Ascending aorta (tissue), 2 donors: ENCODE measurements at regions of chr12 and their contacts with region 1.

Region 1: GRCh38 chr12:52372216-52373154 is 5.2 kb upstream of the KRT85 start:
- DNase-seq: peak; percentile 29 to 87
- H3K4me3 ChIP-seq: no peak overlapping the region
- H3K27ac ChIP-seq: peak overlapping the region in 1 of 2 donors; percentile 68
- H3K4me1 ChIP-seq: peaks cover 0 to 11% of the 10 kb centered on the region in 2 donors
- H3K27me3 ChIP-seq: no peaks in the 10 kb centered on the region
- CTCF ChIP-seq: peak; percentile 65 to 84 (median 66)

Region 2: GRCh38 chr12:51521554-51522276 is 850.8 kb before region 1 on chr12:
- intact Hi-C with region 1: no loop called
- DNase-seq: no peak
- H3K4me3 ChIP-seq: no peak overlapping the region
- H3K27ac ChIP-seq: no peak overlapping the region
- H3K4me1 ChIP-seq: no peaks in the 10 kb centered on the region
- H3K27me3 ChIP-seq: no peaks in the 10 kb centered on the region
- CTCF ChIP-seq: no peak

Region 3: GRCh38 chr12:52156736-52157565 is 215.5 kb before region 1 on chr12:
- intact Hi-C with region 1: loop called (anchors 5 kb)
- DNase-seq: peak in 1 of 2 donors; percentile 88
- H3K4me3 ChIP-seq: no peak overlapping the region
- H3K27ac ChIP-seq: no peak overlapping the region
- H3K4me1 ChIP-seq: peaks cover 0 to 6% of the 10 kb centered on the region in 2 donors
- H3K27me3 ChIP-seq: no peaks in the 10 kb centered on the region
- CTCF ChIP-seq: peak; percentile 87 to 98 (median 95)

Region 4: DNA sequence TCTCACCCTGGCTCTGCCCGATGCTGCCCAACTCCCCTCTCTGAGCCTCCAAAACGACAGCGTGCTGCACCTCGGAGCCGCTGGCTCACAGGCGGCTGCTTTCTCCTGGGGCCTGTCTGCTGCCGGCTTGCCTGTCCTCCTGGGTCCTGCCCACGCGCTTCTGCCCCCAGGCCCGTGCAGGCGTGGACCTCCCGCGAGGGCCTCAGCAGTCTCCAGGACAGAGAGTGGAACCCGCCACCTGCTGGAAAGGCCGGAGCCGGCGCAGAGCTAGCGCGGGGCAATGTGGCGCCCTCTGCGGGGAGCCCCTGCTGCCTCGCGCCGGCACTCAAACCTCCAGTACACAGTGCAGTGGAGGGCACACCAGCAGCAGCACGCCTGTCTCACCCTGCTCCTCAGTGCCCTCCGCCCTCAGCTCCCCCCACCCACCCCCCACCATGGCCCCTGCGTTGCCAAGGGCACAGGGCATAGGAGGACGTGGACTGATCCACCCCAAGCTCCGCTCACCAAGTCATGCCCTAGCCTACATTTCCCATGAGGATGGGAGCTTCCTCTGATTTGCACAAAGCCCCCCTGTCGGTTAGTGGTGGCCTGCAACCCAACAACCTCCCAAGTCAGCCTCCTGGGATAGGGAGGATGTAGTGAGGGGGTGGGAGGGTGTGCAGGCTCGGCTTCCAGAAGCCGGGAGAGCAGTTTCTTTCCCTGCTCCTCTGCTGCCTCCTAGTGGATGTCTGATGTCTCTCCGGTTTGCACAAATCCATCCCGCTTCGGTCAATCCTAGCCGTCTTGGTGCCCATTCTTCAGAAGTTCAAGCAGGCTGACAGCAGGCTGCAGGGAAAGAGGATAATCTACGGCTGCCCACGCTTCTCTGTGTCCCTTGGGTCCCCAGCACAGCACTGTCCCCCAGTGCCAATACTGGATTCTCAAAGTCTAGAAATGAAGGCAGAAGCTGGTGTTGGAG is 507.2 kb after region 1 on chr12:
- intact Hi-C with region 1: loop called (anchors 1 kb)
- DNase-seq: peak in 1 of 2 donors; percentile 85
- H3K4me3 ChIP-seq: peak overlapping the region in 1 of 2 donors; percentile 52
- H3K27ac ChIP-seq: no peak overlapping the region
- H3K4me1 ChIP-seq: peaks cover 0 to under 1% of the 10 kb centered on the region in 2 donors
- H3K27me3 ChIP-seq: no peaks in the 10 kb centered on the region
- CTCF ChIP-seq: peak; percentile 53 to 81 (median 60)